BJ (cell line): ENCODE measurements at regions of chr2 and their contacts with region 1.

Region 1: GRCh38 chr2:218269899-218270720 is at the starts of genes AAMP and PNKD:
- DNase-seq: peak; percentile 97
- H3K4me3 ChIP-seq: peak within 1 kb of the TSS; percentile 83
- H3K27me3 ChIP-seq: no peaks in the 10 kb centered on the region
- CTCF ChIP-seq: no peak
- polyA plus RNA-seq, gene AAMP: 65.1 and 84.9 TPM in 2 replicates
- polyA plus RNA-seq, gene PNKD: 44.5 and 54.5 TPM in 2 replicates

Region 2: DNA sequence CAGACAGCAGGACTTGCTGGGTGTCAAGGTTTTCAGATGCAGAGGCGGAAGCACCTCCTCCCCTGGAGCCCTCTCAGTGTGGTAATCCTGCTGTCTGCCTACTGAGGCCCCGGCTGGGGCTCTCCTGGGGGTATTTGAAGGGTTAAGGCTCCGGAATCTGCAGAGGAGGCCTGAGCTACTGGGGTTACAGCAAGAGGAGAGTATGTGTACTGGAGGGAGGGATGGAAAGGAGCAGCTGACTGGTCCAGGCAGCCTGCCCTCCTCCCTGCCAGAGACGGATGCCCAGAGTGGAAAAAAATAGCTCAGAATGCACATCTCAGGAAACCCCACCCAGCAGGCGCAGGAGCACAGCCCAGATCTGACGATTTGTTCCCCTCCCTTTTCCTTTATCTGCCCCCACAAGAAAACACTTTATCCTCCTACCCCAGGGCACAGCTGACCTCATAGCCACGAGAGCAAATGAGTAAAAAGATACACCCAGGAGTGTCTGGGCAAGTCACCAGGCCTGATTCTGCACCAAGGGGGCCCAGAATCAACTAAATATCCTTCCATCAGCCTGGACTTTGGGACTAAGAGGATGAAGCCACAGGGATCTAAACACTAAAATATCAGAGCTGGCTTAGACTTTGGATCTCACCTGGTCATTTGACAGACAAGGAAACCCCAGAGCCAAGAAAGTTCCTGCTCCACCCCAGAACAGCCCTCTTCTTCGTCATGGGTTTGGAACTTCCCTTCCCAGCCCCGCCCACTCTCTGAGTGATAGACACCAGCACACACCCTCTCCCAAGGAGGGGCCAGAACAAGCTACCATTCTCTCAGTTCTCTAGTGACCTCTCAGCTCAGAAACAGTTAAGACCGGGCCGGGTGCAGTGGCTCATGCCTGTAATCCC is 16.7 kb after region 1 on chr2:
- CTCF ChIA-PET with region 1: interaction called, 87 read pairs
- POLR2A ChIA-PET with region 1: interaction called, 8 read pairs
- DNase-seq: peak; percentile 89
- H3K4me3 ChIP-seq: peak overlapping the region; percentile 38
- H3K27me3 ChIP-seq: no peaks in the 10 kb centered on the region
- CTCF ChIP-seq: no peak

Region 3: DNA sequence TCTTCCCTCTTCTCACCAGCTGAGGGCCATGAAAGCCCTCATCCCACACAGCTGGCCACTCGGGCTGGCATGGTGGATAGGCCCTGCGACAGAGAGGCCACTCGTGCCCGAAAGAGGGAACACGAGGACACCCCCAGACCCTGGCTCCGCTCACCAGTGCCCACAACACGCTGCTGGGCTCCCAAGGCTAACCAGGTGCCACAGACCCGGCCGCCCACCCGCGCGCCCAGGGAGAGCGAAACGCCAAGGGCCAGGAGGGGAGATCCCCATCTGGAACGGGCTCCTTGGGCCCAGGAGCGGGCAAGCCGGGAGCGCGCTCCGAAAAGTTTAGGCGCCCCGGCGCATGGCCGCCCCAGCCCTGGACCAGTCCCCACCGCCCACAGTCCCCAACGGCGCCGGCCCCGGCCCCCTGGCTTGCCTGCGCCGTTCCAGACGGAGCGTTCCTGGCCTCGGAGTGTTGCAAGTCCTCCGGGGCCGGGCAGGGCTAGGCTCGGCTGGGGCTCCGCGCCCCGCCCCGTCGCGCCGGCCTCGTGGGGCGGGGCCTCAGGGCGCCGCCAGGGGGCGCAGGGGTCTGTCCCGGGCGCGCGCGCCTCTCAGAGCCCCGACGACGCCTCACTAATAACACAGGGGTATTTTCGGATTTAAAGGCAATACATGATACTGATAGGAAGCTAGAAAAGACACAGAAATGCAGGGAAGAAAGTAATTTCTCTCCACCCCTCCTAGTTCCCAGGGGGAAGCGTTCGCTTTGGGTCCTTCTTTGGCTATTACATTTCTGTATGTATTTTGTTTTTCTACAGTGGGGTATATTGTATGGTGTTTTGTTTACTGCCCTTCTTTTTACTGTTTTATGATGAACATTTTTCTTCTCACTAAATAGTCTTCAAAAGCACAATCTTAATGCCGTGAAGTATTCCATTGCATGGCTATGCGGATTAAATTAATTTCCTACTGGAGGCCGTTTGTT is 22.2 kb after region 1 on chr2 and contains the start of gene TMBIM1:
- CTCF ChIA-PET with region 1: interaction called, 87 read pairs
- POLR2A ChIA-PET with region 1: interaction called, 3 read pairs
- DNase-seq: no peak
- H3K4me3 ChIP-seq: peak within 1 kb of the TSS; percentile 89
- H3K27me3 ChIP-seq: no peaks in the 10 kb centered on the region
- CTCF ChIP-seq: peak; percentile 56
- polyA plus RNA-seq, gene TMBIM1: 116 and 206 TPM in 2 replicates